AG04449 (cell line): ENCODE measurements at regions of chr1 and their contacts with region 1.

Region 1: DNA sequence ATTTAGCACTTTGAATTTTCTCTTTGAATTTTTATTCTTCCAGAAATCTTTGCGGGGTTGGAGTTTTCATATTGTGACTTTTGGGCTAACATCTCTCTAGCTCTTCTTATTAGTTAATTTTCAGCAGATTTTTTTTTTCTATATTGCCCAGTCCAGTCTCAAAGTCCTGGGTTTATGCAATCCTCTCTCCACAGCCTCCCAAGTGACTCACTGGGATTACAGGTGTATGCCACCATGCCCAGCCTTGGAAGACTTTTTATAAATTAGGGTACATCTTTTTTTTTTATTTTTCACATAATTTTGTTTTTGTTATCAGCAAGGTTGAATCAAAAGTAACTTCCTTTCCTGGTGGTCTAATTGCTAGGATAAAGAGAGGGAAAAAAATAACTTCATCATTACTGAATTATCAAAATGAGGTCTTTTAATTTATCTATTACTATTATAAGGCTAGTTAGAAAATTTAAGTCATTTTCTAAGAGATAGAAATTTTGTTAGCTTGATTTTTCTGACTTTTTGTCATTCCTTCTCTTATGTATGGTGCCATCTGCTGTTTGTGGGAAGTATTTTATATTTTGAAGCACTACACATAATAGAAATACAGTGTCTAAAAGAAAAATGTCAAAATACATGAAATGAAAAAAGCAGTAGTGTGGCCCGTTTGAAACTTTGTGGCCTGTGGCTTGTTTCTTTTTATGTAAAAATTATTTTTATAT is 273.4 kb upstream of the CACYBP start:
- DNase-seq: no peak
- H3K4me3 ChIP-seq: no peak overlapping the region
- CTCF ChIP-seq: peak; percentile 20

Region 2: GRCh38 chr1:174713796-174714195 is 12.5 kb before region 1 on chr1:
- CTCF ChIA-PET with region 1: interaction called, 12 read pairs
- POLR2A ChIA-PET with region 1: no interaction called
- DNase-seq: no peak
- H3K4me3 ChIP-seq: no peak overlapping the region
- CTCF ChIP-seq: no peak

Region 3: DNA sequence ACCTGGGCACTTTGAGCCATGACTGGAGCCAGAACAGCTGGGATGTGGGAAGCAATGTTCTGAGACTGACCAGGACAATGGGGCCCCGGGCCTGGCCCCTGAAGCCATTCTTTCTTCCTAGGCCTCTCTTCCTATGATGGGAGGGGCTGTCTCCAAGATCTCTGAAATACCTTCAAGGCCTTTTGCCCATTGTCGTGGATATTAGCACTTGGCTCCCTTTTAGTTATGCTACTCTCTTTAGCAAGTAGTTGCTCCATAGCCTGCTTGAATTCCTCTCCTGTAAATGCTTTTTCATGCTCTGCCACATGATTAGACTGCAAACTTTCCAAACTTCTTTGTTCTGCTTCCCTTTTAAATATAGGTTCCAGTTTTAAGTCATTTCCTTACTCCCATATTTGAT is 10.5 kb after region 1 on chr1:
- CTCF ChIA-PET with region 1: interaction called, 19 read pairs
- POLR2A ChIA-PET with region 1: no interaction called
- DNase-seq: no peak
- H3K4me3 ChIP-seq: no peak overlapping the region
- CTCF ChIP-seq: no peak

Region 4: DNA sequence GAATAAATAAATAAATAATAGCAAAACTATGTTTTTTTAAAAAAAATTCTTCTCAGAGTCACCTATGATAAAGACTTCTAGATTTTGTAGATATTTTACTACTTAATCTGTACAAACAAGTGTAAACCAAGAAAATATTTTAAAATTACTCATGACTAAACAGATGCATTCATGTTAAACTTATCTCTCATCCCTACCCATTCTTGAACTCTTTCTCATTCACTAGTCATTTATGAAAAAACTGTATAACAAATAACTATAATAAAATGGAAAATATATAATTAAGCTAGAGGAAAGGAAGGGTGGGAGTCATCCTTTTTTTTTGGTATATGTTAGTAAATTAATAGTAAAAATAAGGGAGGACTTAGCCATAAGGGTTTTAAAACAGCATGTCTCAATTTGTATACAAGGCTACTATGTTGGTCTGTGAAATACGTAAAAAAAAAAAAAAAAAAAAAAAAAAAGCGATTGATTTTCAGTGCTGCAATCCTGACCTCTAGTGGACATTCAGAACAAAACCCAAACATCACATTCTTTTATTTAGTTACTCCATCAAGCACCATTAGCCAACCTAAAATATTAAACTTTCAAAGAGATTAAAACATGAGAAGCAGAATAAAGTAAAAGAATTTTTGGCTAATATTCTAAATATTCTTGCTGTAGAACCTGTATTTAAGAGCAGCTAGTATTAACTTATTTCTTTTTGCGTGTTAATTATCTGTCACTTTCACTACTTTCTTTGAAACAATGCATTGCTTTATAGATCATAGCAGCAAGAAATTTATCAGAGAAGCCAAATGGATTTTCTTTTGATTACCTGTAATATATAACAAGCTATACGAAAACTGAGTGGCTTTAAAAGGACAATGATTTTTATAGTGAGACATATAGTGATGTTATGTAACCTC is 17.6 kb after region 1 on chr1:
- CTCF ChIA-PET with region 1: interaction called, 19 read pairs
- POLR2A ChIA-PET with region 1: no interaction called
- DNase-seq: no peak
- H3K4me3 ChIP-seq: no peak overlapping the region
- CTCF ChIP-seq: peak; percentile 18